ENCODE measurements at regions of chr10 and their contacts with region 1.

Region 1: DNA sequence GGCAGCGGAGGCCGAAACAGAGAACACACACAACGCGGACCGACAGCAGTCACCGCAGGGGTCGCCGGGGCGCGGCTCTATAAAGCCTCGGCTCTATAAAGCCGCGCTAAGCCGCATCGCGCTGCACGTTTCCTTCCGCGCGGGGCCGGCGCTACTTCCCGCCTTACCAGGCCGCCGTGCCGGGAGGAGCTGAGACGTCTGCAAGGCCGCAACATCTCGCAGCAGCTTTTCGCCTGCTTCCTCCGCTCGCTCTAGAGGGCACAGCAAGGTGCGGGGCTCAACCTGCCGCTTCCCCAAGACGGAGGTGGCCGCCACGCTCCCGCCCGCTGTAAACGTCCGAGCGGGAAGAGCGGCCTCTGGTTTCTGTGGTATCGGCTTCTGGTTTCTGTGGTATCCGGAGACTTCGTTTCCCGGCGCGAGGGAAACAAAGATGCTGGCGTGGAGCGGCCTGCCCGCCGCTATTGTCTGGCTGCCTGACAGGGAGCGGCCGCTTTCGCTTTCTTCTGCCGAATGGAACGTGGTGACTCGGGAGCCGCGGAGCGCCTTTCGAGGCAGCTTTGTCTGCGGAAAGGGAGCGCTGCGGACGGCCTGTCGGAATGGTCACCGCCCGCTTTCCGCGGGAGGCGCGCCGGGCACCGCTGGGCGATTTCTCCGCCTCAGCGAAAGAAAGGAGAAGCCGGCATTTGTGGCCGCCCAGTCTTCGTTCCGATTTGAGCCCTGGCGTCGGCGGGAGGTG is 91.8 kb downstream of the SPAG6 start:
- DNase-seq: peak; percentile 94
- H3K4me3 Mint-ChIP-seq: peak overlapping the region; percentile 93
- H3K27ac Mint-ChIP-seq: peak overlapping the region; percentile 98
- H3K4me1 Mint-ChIP-seq: peaks cover 47% of the 10 kb centered on the region
- H3K27me3 Mint-ChIP-seq: peaks cover 12% of the 10 kb centered on the region

Region 2: GRCh38 chr10:22228943-22229801 is 207.9 kb before region 1 on chr10:
- intact Hi-C with region 1: loop called (anchors 2 kb)
- DNase-seq: peak; percentile 96
- H3K4me3 Mint-ChIP-seq: peak overlapping the region; percentile 84
- H3K27ac Mint-ChIP-seq: peak overlapping the region; percentile 92
- H3K4me1 Mint-ChIP-seq: peaks cover 21% of the 10 kb centered on the region
- H3K27me3 Mint-ChIP-seq: peaks cover 14% of the 10 kb centered on the region

Region 3: DNA sequence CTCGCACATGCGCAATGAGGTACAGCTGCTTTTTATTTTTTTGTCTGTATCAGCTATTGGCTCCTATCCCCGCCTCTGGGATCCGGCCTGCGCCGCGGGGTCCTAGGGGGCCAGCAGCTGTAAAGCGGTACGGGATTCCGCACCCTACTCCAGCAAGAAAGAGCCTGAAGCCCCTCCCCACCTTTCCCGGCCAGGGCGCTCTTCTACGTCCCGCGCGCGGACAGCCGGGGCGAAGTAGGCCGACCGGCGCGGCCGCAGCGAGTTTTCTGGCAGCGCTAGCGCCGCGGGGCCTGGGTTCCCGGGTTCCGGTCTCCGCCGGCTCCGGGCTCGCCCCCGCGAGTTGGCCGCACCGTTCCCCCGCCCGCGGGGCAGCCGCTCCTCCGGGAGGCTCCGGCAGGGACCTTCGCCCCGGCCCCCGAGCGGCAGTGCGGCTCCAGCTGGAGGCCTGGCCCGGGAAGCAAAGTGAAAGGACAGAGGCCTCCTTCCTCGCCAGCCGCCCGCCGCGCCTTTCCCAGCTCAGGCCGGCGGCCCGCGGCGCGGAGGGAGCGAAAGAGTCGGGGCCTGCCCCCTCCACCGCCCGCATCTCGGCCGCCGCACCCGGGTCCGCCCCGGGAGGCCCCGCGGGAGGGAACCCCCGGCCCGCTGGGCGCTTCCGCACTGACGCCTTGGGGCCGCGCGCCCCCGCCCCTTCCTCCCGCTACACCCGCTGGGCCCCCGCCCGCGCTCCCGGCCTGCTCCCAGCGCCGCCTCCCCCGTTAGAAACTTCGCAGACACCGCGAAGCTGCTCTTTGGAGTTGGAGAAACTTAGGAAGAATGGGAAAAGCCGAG is 96.5 kb before region 1 on chr10:
- intact Hi-C with region 1: loop called (anchors 2 kb)
- DNase-seq: peak; percentile 91
- H3K4me3 Mint-ChIP-seq: peak overlapping the region; percentile 77
- H3K27ac Mint-ChIP-seq: peak overlapping the region; percentile 92
- H3K4me1 Mint-ChIP-seq: peaks cover 40% of the 10 kb centered on the region
- H3K27me3 Mint-ChIP-seq: peaks cover 68% of the 10 kb centered on the region

Region 4: DNA sequence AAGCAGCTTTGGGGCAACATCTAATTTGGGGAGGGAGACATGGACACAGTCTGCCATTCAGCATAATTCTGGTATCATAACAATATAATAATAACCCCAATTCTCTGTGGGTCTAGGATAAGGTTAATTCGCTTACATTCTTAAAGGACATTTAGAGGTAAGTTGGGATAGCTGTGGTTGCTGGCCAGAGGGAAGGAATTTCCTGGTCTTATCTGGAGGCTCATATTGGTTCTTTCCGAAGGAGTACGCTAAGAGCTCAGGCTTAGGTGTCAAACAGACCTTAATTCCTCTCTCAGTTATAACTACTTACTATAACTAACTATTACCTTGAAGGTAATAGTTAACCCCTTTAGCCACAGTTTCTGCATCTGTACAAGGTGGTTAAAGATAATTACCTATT is 22.9 kb before region 1 on chr10:
- intact Hi-C with region 1: no loop called
- DNase-seq: no peak
- H3K4me3 Mint-ChIP-seq: no peak overlapping the region
- H3K27ac Mint-ChIP-seq: no peak overlapping the region
- H3K4me1 Mint-ChIP-seq: peaks cover 2% of the 10 kb centered on the region
- H3K27me3 Mint-ChIP-seq: peaks cover 9% of the 10 kb centered on the region

Region 5: DNA sequence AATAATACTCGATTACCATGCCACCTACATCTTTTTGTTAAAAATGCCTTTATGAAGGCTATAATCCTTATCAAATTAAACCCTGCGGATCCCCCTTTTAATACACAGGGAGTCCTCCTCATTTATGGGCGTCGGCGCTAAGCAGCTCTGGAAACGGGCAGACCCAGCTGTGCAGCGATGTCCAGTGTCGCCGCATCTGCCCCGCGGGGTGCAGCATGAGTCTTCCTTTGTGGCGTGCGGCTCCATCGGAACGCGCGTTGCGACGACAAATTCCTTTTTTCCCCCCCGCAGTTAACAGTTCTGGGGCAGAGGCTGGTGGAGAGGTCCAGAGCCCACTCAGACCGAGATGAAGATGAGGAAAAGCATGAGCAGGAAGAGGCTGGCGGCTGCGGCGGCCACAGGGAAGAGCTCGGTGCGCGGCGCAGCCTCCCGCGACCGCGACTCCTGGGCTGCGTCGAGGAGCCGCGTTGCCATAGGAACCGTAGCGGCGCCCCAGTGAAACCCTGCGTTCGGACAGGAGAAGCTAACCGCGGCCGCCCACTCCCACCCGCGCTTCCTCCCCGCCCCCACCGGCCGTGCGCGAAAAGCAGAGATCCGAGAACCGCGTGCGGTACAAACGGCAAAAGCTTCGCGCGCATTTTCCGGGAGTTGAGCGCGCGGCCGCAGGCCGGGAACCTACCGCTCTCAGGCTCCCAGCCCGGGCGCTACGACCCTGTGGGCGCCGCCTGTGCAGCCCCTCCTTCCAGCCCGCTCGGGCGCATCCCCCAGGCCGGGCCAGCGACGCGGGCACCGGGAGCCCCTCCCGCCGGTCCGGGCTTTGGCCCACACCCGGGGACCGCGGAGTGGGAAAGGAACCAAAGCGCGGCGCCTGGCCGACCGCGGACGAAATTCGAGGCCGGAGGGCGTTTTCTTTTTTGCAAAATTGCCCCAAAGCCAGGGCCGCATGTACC is 38.9 kb after region 1 on chr10:
- intact Hi-C with region 1: loop called (anchors 5 kb)
- DNase-seq: peak; percentile 79
- H3K4me3 Mint-ChIP-seq: peak overlapping the region; percentile 86
- H3K27ac Mint-ChIP-seq: peak overlapping the region; percentile 86
- H3K4me1 Mint-ChIP-seq: peaks cover 11% of the 10 kb centered on the region
- H3K27me3 Mint-ChIP-seq: peaks cover 57% of the 10 kb centered on the region

Region 6: DNA sequence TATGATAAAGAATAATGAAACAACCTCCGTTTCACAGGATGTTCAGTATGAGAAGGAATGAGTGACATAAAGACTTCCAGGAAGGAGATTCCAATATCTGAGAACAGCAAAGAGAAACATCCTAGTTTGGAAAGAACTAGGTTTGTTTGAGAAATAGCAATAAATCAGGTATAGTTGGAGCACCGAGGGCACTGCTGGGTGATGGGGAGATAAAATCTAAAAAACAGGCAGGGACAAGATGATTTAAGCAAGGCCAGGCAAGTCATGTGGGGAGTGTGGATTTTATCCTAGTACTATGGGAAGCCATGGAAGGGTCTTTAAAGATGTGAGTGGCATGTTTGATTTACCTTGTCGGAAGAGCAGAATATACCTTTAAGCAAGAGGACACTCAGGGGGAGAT is 78.0 kb after region 1 on chr10:
- intact Hi-C with region 1: no loop called
- DNase-seq: no peak
- H3K4me3 Mint-ChIP-seq: no peak overlapping the region
- H3K27ac Mint-ChIP-seq: no peak overlapping the region
- H3K4me1 Mint-ChIP-seq: no peaks in the 10 kb centered on the region
- H3K27me3 Mint-ChIP-seq: peaks cover 43% of the 10 kb centered on the region

Region 7: GRCh38 chr10:22554461-22555182 is 117.6 kb after region 1 on chr10:
- intact Hi-C with region 1: no loop called
- DNase-seq: no peak
- H3K4me3 Mint-ChIP-seq: no peak overlapping the region
- H3K27ac Mint-ChIP-seq: no peak overlapping the region
- H3K4me1 Mint-ChIP-seq: peaks cover 14% of the 10 kb centered on the region
- H3K27me3 Mint-ChIP-seq: no peaks in the 10 kb centered on the region

Region 8: DNA sequence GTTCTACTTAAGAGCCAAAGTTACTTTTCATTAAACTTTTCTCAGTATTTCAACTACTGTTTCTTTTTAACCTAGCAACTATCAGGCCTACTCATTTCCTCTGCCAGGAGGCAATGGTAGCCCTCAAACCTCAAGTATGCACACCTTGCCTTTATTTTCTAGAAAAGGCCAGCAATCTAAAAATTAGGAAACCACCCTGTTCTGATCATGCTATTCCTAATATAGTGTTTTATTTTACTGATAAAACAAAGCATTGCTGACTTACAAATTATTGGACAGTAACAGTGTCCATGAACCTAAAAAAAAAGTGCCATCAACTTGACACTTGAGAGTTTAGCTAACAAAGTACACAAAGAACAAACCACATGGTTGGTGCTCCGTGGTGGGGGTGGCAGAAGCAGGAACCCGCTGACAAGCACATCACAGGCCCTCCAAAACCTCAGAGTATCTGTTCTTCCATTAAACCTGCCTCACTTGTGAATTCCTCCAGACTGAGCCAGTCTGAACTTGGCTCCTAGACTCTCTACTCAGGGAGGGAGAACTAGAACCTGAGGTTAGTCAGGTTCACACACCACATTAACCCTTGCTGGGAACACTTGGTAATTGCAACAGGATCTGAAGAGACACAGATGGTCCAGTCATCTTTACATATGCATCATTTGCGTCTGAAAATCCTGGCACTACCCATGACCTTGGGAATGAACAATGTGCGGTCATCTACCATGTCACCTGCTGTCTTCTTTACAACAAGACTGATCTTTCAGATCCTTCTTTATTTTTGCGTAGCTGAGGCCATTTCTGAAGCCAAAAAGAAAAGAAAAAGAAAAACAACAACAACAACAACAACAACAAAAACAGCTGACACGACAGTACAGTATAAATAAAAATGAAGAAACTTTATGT is 245.4 kb after region 1 on chr10:
- intact Hi-C with region 1: loop called (anchors 10 kb)
- DNase-seq: peak; percentile 89
- H3K4me3 Mint-ChIP-seq: peak overlapping the region; percentile 78
- H3K27ac Mint-ChIP-seq: peak overlapping the region; percentile 92
- H3K4me1 Mint-ChIP-seq: peaks cover 76% of the 10 kb centered on the region
- H3K27me3 Mint-ChIP-seq: no peaks in the 10 kb centered on the region

Region 9: DNA sequence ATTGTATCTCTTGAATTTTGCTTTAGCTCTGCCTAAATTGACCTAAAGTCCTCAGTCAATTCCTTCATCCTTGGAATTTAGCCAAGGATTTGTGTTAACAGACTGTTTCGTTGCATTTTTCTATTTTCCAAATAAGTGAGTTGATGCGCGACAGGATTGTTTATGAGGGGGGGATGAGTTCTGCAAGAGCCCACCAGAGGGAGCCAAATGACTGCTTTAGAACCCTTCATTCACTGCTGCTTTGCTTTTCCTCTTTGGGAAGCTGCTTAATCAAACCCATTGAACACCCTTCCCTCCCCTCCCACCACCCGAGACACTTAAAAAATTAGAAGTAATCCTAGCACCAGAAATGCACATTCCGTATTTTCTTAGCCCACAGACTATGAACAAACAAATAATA is 721.3 kb after region 1 on chr10:
- intact Hi-C with region 1: no loop called
- DNase-seq: peak; percentile 76
- H3K4me3 Mint-ChIP-seq: no peak overlapping the region
- H3K27ac Mint-ChIP-seq: no peak overlapping the region
- H3K4me1 Mint-ChIP-seq: peaks cover 8% of the 10 kb centered on the region
- H3K27me3 Mint-ChIP-seq: peaks cover 6% of the 10 kb centered on the region

Measured in activated CD4-positive, alpha-beta T cell treated with anti-CD3 and anti-CD28 coated beads, Interleukin-2, amount 10 ng/mL, durations not matched to agents 24 days and 14 days (primary cell).